ENCODE measurements at regions of chr10 and their contacts with region 1.

Region 1: GRCh38 chr10:38094158-38094920 is at the start of gene ZNF37A:
- DNase-seq: peak; percentile 96 to 98
- H3K4me3 ChIP-seq: peak within 1 kb of the TSS; percentile 85
- CTCF ChIP-seq: no peak
- POLR2A ChIP-seq: no peak
- total RNA-seq, gene ZNF37A: 6.5 to 11.3 (median 9.6) TPM

Region 2: DNA sequence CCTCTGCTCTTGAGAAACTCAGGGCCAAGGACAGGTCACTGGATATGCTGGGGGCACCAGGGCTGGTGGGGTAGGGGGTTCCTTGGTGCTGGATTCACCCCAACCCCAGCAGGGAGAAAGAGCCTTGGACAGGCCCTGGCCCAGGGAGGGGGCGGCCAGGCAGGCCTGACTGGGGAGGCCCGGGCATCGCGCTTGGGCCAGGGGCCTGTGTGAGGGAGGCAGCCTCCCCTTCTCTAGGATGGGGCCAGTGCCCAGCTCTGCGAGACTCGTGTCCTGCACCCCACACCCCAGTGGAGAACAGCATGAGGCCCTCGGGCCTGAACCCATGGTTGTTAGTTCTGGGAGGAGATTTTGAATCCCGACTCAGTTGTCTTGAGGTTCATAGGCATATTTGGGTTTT is 454.0 kb before region 1 on chr10:
- intact Hi-C with region 1: no loop called
- DNase-seq: no peak
- H3K4me3 ChIP-seq: no peak overlapping the region
- CTCF ChIP-seq: no peak
- POLR2A ChIP-seq: no peak

Region 3: DNA sequence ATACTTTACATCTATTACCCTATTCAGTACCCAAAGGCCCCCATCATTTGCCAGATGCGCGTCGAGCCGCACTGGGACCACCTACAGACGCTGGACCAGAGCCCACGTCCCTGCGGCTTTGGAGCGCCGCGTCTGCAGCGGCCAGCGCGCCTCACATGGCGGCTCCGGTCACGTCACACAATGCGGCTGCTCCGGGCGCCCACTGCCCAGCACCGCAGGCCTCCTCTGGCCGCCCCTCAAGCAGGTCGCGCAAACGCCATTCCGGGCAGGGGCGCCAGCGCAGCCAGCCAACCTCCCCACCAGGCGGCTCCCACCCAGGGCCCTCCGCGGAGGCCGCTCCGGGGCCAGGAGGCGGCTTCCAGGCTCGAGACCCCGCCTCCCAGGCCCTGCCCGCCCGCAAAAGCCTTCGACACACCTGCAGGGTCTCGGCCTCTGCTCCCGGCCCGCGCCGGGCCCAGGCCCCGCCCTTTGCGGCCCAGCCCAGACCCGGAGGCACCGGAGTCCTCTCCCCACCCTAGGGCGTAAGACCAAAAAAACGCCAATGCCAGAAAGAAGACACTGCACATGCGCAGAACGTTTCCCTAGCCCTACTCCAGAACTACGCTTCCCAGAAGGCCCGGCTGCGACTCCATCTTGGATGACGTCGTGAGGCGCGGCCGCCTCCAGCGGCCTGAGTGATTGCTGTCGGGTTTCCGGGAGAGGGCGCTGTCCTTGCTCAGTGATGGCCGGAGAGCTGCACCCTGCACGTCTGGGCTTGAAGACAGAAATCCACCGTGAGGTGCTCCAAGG is 118.1 kb before region 1 on chr10 and contains the start of gene ZNF25:
- intact Hi-C with region 1: loop called (anchors 10 kb)
- DNase-seq: peak; percentile 98 to 99
- H3K4me3 ChIP-seq: peak within 1 kb of the TSS; percentile 86
- CTCF ChIP-seq: peak in 1 of 3 donors; percentile 86
- POLR2A ChIP-seq: peak in 1 of 2 donors; percentile 56
- total RNA-seq, gene ZNF25: 5.3 to 9.2 (median 7.7) TPM